K562 (cell line): ENCODE measurements at regions of chr7 and their contacts with region 1.

Region 1: DNA sequence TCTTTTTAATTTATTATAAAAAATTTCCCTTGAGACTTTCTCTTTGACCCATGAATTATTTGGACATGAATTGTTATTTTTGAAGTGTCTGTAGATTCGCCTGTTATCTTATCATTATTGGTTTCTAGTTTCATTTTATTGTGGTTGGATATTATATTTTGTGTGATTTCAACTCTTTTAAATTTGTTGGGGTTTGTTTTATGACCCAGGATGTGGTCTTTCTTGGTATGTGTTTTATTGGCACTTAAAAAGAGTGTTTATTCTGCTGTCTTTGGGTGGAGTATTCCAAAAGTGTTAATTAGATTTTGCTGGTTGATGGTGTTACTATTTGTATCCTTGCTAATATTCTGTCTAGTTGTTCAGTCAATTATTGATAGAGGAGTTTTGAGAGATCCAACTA is 50.5 kb upstream of the GPR141 start:
- DNase-seq: no peak
- ATAC-seq: no peak
- H3K4me3 ChIP-seq: no peak overlapping the region
- H3K27ac ChIP-seq: no peak overlapping the region
- H3K4me1 ChIP-seq: no peaks in the 10 kb centered on the region
- H3K27me3 ChIP-seq: no peaks in the 10 kb centered on the region
- CTCF ChIP-seq: no peak
- EP300 ChIP-seq: no peak
- POLR2A ChIP-seq: no peak
- RAD21 ChIP-seq: no peak

Region 2: GRCh38 chr7:36147324-36147723 is 1485.7 kb before region 1 on chr7:
- CTCF ChIA-PET with region 1: no interaction called
- POLR2A ChIA-PET with region 1: no interaction called
- in situ Hi-C with region 1: loop called (anchors 10 kb)
- intact Hi-C with region 1: no loop called
- DNase-seq: no peak
- ATAC-seq: no peak
- H3K4me3 ChIP-seq: no peak overlapping the region
- H3K27ac ChIP-seq: no peak overlapping the region
- H3K4me1 ChIP-seq: peaks cover 2 to 3% of the 10 kb centered on the region in 2 experiments; a peak in 4 of 5 replicates
- H3K27me3 ChIP-seq: peaks cover 0 to 4% of the 10 kb centered on the region in 2 experiments; a peak in 1 of 5 replicates
- CTCF ChIP-seq: no peak
- EP300 ChIP-seq: no peak
- POLR2A ChIP-seq: no peak
- RAD21 ChIP-seq: no peak